ENCODE measurements at regions of chr13 and their contacts with region 1.

Region 1: DNA sequence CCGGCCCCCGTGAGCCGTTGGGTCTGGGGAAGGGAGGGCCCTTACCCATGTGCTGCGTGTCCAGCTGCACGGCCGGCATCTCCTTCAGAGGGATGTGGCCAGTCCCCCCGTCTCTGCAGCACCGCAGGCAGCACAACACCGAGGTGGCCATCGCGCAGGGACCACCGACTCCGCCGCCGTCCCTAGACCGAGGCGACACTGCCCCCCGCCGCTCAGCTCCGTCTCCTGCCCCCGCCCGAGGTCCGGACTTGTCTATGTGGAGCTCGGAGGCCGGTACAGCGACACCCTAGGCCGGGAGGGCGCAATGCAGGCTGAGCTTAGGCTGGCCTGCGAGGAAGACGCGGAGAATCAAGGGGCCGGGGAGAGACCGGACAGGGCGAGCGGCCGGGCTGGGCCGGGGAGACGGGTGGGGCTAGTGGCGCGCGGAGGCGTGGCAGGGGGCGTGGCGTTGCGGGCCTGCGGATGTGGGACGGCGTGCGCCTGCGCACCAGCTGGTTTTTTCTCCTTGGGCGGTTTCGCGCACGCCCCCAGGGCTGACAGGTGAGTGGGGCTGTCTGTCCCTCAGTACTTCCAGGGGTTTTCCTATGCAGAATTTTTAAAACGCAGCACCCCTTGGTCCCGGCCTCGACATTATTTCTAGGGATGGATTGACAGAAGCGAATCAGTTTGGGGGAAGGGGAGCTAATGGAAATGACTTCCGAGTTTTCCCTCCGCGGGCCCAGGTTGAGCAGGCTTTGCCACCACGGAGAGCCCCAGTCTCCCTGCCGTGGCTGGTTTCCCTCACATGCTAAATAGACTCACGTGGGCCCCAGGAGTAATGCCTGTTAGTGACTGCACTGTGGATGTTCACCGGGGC is at the start of gene SPRYD7:
- DNase-seq: peak; percentile 95
- H3K4me3 ChIP-seq: peak within 1 kb of the TSS; percentile 93
- H3K27ac ChIP-seq: peak within 1 kb of the TSS; percentile 68
- H3K27me3 ChIP-seq: no peaks in the 10 kb centered on the region
- CTCF ChIP-seq: peak; percentile 85
- polyA plus RNA-seq, gene SPRYD7: 6.4 and 8.0 TPM in 2 replicates

Region 2: DNA sequence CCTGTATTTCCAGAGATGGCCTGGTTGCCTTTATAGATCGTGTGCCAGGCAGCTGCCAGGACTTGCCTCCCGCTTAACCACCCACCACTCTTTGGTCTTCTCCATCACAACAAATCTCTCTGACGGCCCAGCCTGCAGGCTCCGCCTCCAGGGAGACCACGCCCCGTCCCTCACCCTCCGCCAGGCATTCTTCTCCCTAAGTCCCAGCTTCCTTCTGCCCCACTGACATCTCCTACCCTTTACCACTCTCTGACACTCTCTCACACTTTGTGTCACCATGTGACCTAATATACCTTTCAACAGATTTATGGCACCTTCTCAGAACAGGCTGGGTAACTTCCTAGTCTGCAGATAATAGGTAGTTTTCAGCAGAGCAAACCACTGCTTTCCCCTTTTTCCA is 587.6 kb before region 1 on chr13:
- CTCF ChIA-PET with region 1: no interaction called
- POLR2A ChIA-PET with region 1: no interaction called
- DNase-seq: no peak
- H3K4me3 ChIP-seq: no peak overlapping the region
- H3K27ac ChIP-seq: no peak overlapping the region
- H3K27me3 ChIP-seq: no peaks in the 10 kb centered on the region
- CTCF ChIP-seq: no peak

Region 3: DNA sequence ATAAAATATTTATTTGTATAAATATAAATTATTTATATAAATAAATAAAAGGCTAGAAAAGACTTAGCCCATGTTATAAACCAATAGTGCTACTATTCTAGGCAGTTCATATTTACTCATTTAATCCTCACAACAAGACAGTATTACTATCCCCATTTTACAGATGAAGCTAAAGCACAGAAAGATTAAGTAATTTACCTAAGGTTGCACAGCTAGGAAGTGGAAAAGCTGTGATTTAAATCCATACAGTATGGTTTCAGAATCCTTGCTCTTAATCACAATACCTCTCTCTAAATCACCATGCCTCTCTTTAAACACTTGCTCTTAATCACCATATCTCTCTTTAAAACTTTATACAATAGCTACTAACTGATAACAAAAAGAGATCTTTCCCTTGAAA is 14.0 kb before region 1 on chr13:
- CTCF ChIA-PET with region 1: interaction called, 16 read pairs
- POLR2A ChIA-PET with region 1: no interaction called
- DNase-seq: no peak
- H3K4me3 ChIP-seq: no peak overlapping the region
- H3K27ac ChIP-seq: no peak overlapping the region
- H3K27me3 ChIP-seq: no peaks in the 10 kb centered on the region
- CTCF ChIP-seq: no peak

Region 4: DNA sequence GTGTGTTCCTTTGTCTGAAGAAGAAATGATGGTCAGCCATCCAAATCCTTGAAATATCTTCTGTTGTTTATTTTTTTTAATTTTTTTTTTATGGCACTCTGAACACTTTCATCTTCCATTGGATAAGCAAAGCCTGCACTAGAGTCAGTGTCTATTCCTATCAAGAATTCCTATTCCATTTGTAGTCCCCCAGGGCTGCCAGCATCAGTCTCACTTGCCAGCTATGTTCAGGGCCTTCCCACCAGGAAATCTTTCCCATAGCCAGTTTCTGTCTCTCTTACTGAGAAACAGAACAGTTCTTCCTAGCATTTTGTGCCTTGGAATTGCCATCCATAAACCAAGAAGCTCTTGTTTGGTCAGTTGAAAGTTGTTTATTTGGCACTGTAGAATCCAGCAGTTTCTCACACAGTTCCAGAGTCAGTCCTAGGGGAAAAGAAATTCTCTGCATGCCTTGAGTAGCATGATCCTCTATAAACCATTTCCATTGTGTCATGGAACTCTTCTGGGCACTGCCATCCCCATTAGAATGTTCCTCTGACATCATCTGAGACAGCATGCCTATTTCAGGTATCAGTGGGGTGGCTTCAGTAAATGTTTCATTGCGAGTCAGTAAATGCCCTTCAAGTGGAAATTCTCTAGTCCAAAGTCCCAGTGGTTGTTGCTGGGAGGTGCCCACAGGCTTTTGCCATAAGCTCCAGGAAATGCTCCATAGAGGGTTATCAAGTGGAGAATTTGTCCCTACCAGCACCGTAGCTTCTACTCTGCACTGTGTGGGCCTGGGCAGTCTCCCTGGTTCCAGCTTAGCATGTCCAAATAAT is 18.6 kb after region 1 on chr13:
- CTCF ChIA-PET with region 1: interaction called, 11 read pairs
- POLR2A ChIA-PET with region 1: no interaction called
- DNase-seq: no peak
- H3K4me3 ChIP-seq: no peak overlapping the region
- H3K27ac ChIP-seq: peak overlapping the region; percentile 22
- H3K27me3 ChIP-seq: no peaks in the 10 kb centered on the region
- CTCF ChIP-seq: no peak

Region 5: DNA sequence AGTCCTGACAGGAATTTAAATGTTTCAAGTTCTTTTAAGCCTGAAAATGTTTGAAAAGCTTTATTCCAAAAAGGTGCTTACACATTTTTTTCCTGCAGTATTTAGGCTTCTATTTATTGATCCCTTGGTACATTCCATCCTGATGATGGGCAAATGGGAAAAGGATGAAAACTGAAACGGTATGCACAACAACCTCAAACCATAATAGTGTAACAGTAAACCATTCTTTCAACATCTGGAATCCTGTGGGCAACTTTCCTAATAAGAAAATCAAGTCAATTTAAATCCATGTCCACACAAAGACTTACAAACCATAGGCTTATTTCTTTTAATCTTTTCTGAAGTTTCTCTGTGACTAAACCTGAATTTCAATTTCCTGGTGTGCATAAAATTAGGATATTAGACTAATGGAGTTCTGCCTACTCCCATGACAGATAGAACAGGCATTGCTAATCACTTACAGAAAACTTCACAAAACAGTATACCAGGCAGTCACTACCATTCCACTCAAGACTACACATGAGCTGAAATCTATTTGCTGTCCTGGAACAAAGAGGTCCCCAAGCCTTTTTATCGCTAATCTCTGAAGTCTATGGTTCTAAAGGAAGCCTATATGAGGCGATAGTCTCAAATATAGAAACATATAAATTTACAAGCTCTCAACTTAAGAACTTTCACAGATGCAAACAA is 803.9 kb after region 1 on chr13:
- CTCF ChIA-PET with region 1: no interaction called
- POLR2A ChIA-PET with region 1: no interaction called
- DNase-seq: no peak
- H3K4me3 ChIP-seq: no peak overlapping the region
- H3K27ac ChIP-seq: no peak overlapping the region
- H3K27me3 ChIP-seq: peaks cover 20% of the 10 kb centered on the region
- CTCF ChIP-seq: no peak

Measured in AG04450 (cell line).